Caco-2 (cell line): ENCODE measurements at regions of chr10 and their contacts with region 1.

Region 1: DNA sequence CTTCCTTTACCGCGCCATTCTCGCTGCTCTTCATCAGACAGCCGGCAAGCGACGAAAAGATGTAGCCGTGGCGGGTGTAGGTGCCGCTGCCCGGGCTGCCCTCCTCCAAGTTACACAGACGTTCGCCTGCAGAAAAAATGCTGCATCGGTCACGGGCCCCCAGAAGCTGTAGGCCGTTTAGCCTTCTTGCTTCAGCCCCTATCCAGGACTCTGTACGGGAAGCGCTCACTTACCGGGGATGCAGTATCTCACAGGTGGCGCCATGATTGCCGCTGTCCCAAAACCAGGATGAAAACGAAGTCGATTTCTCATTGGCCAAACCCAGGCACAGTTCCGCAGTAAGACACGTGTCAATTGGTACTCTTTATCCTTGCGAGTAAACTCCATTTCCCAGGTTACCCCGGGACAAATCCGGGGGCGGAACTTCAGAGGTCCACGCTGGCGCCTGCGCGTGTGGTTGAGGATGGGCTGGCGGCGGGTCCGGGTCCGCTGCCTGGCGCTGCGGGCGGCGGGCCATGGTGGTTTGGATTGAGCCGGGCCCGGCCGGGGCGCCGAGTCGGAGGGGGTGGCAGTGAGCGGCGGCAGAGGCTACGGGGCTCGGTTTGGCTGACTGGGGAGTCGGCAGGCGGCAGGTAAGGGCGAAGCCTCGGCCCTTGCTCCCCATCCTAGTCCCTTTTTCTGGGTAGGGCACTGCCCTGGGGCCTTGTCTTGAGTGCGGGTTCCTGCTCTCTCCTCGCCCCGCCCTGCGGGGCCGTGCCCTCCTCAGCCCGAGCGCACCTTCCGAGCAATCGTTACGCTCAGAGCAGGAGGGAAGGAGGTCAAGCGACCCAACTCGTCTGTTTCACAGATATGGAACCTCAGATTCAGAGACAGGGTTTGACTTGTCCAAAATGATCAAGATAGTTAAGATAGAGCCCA is at the starts of genes EXOSC1 and ZDHHC16:
- DNase-seq: peak; percentile 94 to 95
- H3K4me3 ChIP-seq: peak within 1 kb of the TSS; percentile 94
- H3K4me3 Mint-ChIP-seq: peak within 1 kb of the TSS; percentile 94
- H3K27ac Mint-ChIP-seq: peak within 1 kb of the TSS; percentile 85
- H3K4me1 ChIP-seq: peaks cover 6% of the 10 kb centered on the region
- H3K4me1 Mint-ChIP-seq: no peaks in the 10 kb centered on the region
- H3K27me3 ChIP-seq: no peaks in the 10 kb centered on the region
- H3K27me3 Mint-ChIP-seq: no peaks in the 10 kb centered on the region
- CTCF ChIP-seq: peak in 1 of 2 experiments; percentile 31
- total RNA-seq, gene EXOSC1: 77.5 and 84.7 TPM in 2 replicates
- total RNA-seq, gene ZDHHC16: 43.5 and 48.3 TPM in 2 replicates

Region 2: GRCh38 chr10:97425964-97426775 is 19.8 kb before region 1 on chr10 and contains the start of gene PGAM1:
- CTCF ChIA-PET with region 1: no interaction called
- POLR2A ChIA-PET with region 1: no interaction called
- intact Hi-C with region 1: loop called (anchors 1 kb)
- DNase-seq: peak; percentile 94 to 98
- H3K4me3 ChIP-seq: peak within 1 kb of the TSS; percentile 83
- H3K4me3 Mint-ChIP-seq: peak within 1 kb of the TSS; percentile 75
- H3K27ac Mint-ChIP-seq: peak within 1 kb of the TSS; percentile 83
- H3K4me1 ChIP-seq: peaks cover 12% of the 10 kb centered on the region
- H3K4me1 Mint-ChIP-seq: no peaks in the 10 kb centered on the region
- H3K27me3 ChIP-seq: no peaks in the 10 kb centered on the region
- H3K27me3 Mint-ChIP-seq: no peaks in the 10 kb centered on the region
- CTCF ChIP-seq: peak; percentile 54 to 91
- total RNA-seq, gene PGAM1: 412 and 462 TPM in 2 replicates